A673 (cell line): ENCODE measurements at regions of chr22 and their contacts with region 1.

Region 1: GRCh38 chr22:21615731-21616130 is 14.1 kb downstream of the YDJC start:
- DNase-seq: no peak
- H3K4me3 ChIP-seq: no peak overlapping the region
- H3K27ac ChIP-seq: no peak overlapping the region
- H3K4me1 ChIP-seq: no peaks in the 10 kb centered on the region
- H3K27me3 ChIP-seq: no peaks in the 10 kb centered on the region
- CTCF ChIP-seq: no peak

Region 2: GRCh38 chr22:21587803-21588611 is 27.7 kb before region 1 on chr22:
- CTCF ChIA-PET with region 1: no interaction called
- POLR2A ChIA-PET with region 1: no interaction called
- intact Hi-C with region 1: loop called (anchors 5 kb)
- DNase-seq: no peak
- H3K4me3 ChIP-seq: no peak overlapping the region
- H3K27ac ChIP-seq: no peak overlapping the region
- H3K4me1 ChIP-seq: no peaks in the 10 kb centered on the region
- H3K27me3 ChIP-seq: no peaks in the 10 kb centered on the region
- CTCF ChIP-seq: no peak